ENCODE measurements at regions of chr20 and their contacts with region 1.

Region 1: DNA sequence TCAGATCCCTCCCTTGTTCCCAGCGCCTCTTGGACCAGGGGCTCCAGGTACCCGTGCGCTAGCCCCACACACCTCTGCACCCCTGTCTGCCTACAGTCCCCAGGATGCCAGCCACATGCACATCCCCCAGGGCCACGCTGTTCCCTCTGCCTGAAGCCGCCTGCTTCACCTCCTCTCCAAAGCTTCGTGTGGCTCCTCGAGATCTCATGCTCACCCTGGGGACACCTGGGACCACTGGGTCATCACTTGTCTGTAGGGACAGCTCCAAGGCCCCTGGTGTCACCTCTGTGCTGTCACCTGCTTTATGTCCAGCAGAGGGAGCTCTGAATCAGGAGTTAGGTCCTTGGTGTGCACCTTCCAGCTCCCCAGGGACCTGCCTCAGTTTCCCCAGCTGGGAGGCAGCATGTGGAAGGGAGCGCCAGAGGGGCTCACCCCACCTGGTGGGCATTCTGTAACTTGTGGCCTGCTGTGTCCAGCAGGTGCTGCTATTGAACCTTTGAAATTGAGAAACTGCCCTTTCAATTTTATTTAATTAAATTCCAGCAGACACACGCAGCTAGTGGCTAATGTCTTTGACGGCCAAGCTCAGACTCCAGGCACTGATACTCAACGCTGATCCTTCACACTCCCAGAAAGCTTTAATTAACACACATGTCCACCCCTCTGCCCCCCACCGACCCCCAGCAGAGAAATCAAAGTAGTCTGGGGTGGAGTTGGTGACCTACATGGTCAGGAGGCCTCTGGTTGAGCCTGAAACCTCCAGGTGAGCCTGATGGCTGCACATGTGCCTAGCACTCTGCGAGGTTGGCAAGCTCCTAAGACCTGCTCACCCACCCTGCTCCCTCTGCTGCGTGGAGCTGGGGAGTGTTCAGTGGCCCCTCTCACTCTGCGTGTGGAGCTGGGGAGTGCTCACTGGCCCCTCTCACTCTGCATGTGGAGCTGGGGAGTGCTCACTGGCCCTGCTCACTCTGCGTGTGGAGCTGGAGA is 7.6 kb upstream of the YTHDF1 start:
- DNase-seq: peak in 1 of 2 experiments; percentile 51
- H3K4me3 ChIP-seq: no peak overlapping the region
- H3K27ac ChIP-seq: no peak overlapping the region
- H3K4me1 ChIP-seq: peaks cover 44% of the 10 kb centered on the region
- H3K27me3 ChIP-seq: peaks cover 17% of the 10 kb centered on the region
- CTCF ChIP-seq: peak; percentile 99

Region 2: GRCh38 chr20:63172720-63173119 is 50.8 kb before region 1 on chr20:
- CTCF ChIA-PET with region 1: no interaction called
- POLR2A ChIA-PET with region 1: no interaction called
- intact Hi-C with region 1: no loop called
- DNase-seq: peak in 1 of 2 experiments; percentile 20
- H3K4me3 ChIP-seq: no peak overlapping the region
- H3K27ac ChIP-seq: no peak overlapping the region
- H3K4me1 ChIP-seq: no peaks in the 10 kb centered on the region
- H3K27me3 ChIP-seq: peaks cover 70% of the 10 kb centered on the region
- CTCF ChIP-seq: peak; percentile 33; the same call in 1 of the 2 replicates

Region 3: GRCh38 chr20:63253438-63254236 is 30.1 kb after region 1 on chr20:
- CTCF ChIA-PET with region 1: interaction called, 10 read pairs
- POLR2A ChIA-PET with region 1: no interaction called
- intact Hi-C with region 1: loop called (anchors 1 kb)
- DNase-seq: no peak
- H3K4me3 ChIP-seq: no peak overlapping the region
- H3K27ac ChIP-seq: no peak overlapping the region
- H3K4me1 ChIP-seq: peaks cover 13% of the 10 kb centered on the region; the same call in 1 of the 2 replicates
- H3K27me3 ChIP-seq: peaks cover 60% of the 10 kb centered on the region
- CTCF ChIP-seq: no peak

Region 4: DNA sequence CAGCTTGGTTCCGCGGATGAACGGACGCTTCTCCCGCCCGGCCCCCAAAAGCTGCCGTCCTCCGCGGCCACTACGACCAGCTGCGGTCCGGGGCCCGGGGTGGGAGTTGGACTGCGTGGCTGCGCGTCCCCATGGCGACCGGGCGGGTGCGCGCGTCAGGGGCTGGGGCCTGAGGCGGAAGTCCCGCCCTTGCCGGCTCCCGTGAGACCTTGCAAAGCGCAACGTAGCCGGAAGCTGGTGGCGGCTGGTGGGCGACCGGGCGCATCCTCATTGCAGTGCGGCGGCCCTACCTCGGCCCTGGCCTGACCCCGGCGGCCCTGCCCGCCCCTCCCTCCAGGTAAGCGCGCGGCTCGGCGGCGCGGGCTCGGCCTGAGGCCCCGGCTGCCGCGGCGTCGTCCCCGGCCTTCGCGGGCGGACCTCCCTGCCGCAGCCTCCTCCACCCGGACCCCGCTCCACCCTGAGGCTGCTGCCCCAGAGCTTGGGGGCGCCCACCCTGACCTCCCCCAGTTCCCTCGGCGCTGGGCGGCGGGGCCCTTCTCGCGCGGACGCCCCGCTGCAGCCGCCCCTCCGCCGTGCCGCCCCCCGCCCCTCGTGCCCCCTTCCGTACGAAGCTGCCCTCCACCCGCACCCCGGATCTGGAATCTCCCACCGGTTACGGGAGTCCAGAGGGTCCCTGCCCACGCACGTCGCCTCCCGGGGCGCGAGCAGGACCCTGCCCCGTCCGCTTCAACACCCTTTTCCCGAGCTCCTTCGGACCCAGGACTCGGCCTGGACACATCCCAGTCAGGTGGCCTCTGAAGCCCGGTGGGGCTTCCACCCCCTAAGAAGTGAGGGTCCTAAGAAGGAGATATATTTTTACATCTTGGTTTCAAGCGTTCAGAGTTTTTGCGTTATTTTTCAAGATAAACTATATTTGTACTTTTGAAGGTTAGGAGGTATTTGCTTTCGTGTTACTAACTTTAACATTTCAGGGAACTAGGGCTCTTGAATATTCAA is 49.4 kb after region 1 on chr20 and contains the start of gene ARFGAP1:
- CTCF ChIA-PET with region 1: interaction called, 13 read pairs
- POLR2A ChIA-PET with region 1: interaction called, 16 read pairs
- intact Hi-C with region 1: no loop called
- DNase-seq: peak; percentile 86 to 90
- H3K4me3 ChIP-seq: peak within 1 kb of the TSS; percentile 91
- H3K27ac ChIP-seq: peak within 1 kb of the TSS; percentile 10; the same call in 1 of the 2 replicates
- H3K4me1 ChIP-seq: peaks cover 18% of the 10 kb centered on the region
- H3K27me3 ChIP-seq: no peaks in the 10 kb centered on the region
- CTCF ChIP-seq: no peak
- total RNA-seq, gene ARFGAP1: 89.0 and 101 TPM in 2 replicates

Region 5: DNA sequence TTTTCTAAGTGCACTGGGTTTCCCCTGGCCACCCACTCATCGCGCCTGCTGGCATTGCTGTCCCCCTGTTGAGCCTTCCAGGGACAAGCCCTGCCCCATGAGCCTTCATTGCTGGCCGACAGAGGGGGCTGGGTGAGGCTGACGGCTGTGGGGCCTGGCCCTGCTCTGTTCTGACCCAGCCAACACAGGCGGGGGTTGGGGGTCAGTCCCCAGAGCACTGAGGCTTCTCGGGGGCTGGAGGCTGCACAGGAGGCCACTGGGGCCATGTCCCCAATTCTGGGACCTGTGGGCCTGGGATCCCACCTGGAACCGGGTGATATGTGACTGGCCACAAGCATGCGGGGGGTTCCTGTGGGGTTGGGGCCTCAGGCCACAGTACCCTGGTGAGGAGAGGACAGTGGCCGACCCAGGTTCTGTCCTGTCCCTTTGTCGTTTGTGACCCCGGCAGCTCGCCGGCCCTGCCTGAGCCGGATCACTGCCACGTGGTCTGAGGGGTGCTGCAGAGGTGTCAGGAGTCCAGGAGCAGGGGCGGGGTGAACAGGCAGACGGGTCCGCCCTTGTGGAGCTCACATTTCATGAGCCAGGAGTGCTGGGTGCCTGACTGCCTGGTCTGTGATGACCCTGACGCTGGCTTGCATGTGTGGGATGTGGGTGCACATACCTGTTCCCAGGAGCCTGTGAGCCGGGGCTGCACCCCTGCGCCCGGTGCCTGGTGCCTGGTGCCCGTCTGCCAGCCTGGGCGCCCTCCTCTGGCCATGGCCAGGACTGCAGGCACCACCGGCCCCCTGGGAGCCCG is 67.4 kb after region 1 on chr20:
- CTCF ChIA-PET with region 1: no interaction called
- POLR2A ChIA-PET with region 1: no interaction called
- intact Hi-C with region 1: loop called (anchors 5 kb)
- DNase-seq: peak in 1 of 2 experiments; percentile 47
- H3K4me3 ChIP-seq: no peak overlapping the region
- H3K27ac ChIP-seq: no peak overlapping the region
- H3K4me1 ChIP-seq: no peaks in the 10 kb centered on the region
- H3K27me3 ChIP-seq: peaks cover 17% of the 10 kb centered on the region
- CTCF ChIP-seq: peak; percentile 83